ENCODE measurements at regions of chr12 and their contacts with region 1.

Region 1: DNA sequence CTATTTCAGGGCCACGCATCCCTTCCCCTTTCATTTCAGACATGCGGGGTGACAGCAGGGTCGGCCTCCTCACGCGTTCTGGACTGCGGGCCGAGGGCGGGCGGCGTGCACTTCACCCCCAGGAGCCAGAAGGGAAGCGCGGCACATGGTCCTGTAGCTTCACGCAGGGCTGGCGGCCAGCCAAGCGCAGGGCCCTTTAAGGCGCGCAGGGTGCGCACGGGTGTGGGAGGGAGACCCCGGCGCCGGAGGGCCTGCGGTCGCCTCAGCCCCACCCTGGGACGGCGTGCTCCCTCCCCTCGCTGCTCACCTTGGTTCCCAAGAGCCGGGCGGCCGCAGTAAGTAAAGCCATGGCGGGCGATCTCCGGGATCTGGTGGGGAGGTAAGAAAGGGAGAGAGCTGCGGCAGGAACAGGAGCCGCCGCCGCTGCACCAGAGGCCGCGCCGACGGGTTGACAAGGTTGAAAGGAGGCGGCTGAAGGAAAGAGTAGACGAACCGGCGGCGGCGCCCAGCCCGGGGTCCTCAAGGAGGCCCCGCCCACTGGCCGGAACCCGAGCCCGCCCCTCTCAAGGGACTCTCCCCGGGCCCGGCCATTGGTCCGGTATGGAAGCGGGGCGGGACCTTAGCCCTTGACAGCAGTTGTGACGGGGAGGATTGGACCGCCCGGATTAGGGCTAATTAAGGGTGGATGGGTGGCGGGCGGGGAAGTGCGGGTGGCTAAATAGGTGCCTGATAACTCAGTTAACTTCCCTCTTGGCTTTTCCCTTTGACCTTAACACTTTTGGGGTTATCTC is at the start of gene CS:
- DNase-seq: peak; percentile 97
- ATAC-seq: peak; percentile 96
- H3K4me3 Mint-ChIP-seq: peak within 1 kb of the TSS; percentile 96
- H3K27ac Mint-ChIP-seq: peak within 1 kb of the TSS; percentile 97
- H3K4me1 Mint-ChIP-seq: peaks cover 59% of the 10 kb centered on the region
- H3K27me3 Mint-ChIP-seq: no peaks in the 10 kb centered on the region
- CTCF ChIP-seq: no peak
- total RNA-seq, gene CS: 229 and 233 TPM in 2 replicates

Region 2: GRCh38 chr12:55973598-55974307 is 326.3 kb before region 1 on chr12 and contains the start of gene RAB5B:
- CTCF ChIA-PET with region 1: no interaction called
- POLR2A ChIA-PET with region 1: no interaction called
- intact Hi-C with region 1: loop called (anchors 1 kb)
- DNase-seq: peak; percentile 83
- ATAC-seq: peak; percentile 87
- H3K4me3 Mint-ChIP-seq: no peak within 1 kb of the TSS
- H3K27ac Mint-ChIP-seq: no peak within 1 kb of the TSS
- H3K4me1 Mint-ChIP-seq: peaks cover 27% of the 10 kb centered on the region
- H3K27me3 Mint-ChIP-seq: no peaks in the 10 kb centered on the region
- CTCF ChIP-seq: no peak
- total RNA-seq, gene RAB5B: 82.1 and 83.8 TPM in 2 replicates

Region 3: GRCh38 chr12:56258057-56258819 is 41.8 kb before region 1 on chr12 and contains the start of gene ANKRD52:
- CTCF ChIA-PET with region 1: interaction called, 3 read pairs
- POLR2A ChIA-PET with region 1: no interaction called
- intact Hi-C with region 1: loop called (anchors 1 kb)
- DNase-seq: peak; percentile 89
- ATAC-seq: peak; percentile 94
- H3K4me3 Mint-ChIP-seq: peak within 1 kb of the TSS; percentile 91
- H3K27ac Mint-ChIP-seq: peak within 1 kb of the TSS; percentile 77
- H3K4me1 Mint-ChIP-seq: peaks cover 21% of the 10 kb centered on the region
- H3K27me3 Mint-ChIP-seq: no peaks in the 10 kb centered on the region
- CTCF ChIP-seq: peak; percentile 28
- total RNA-seq, gene ANKRD52: 44.1 and 44.8 TPM in 2 replicates

Region 4: DNA sequence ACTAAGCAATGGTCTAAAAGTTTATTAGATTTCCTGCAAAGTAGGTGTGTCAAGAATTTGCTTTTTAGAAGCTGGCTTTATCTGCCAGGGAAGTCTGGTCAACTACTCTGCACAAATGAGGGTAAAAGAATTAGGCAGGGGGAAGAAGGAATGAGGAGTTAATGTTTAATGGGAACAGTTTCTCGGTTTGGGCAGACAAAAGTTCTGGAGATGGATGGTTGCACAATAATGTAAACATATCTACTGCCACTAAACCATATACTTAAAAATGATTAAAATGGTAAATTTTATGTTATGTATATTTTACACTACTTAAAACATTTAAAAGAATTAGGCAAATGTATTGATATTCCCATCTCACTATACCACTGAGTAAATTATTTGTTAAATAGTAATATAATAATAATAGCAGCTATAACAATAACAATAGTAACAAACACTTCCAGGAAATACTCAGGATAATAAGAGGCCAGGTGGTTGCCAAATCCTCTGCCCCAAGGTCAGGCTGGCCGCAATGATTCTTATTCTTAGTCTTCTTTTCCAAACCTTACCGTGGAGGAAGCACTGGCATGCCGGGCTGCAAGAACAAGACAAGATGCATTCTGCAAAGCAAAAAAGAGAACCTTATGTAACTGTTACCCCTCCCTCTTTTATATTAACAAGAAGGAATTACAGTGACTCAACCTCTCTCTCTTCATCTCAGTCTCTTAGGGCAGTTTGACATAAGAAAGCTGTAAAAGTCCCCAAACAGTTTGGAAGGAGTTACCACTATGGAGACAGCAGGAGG is 13.8 kb before region 1 on chr12:
- CTCF ChIA-PET with region 1: no interaction called
- POLR2A ChIA-PET with region 1: interaction called, 4 read pairs
- intact Hi-C with region 1: loop called (anchors 2 kb)
- DNase-seq: no peak
- ATAC-seq: no peak
- H3K4me3 Mint-ChIP-seq: no peak overlapping the region
- H3K27ac Mint-ChIP-seq: no peak overlapping the region
- H3K4me1 Mint-ChIP-seq: peaks cover 8% of the 10 kb centered on the region
- H3K27me3 Mint-ChIP-seq: no peaks in the 10 kb centered on the region
- CTCF ChIP-seq: no peak

Region 5: DNA sequence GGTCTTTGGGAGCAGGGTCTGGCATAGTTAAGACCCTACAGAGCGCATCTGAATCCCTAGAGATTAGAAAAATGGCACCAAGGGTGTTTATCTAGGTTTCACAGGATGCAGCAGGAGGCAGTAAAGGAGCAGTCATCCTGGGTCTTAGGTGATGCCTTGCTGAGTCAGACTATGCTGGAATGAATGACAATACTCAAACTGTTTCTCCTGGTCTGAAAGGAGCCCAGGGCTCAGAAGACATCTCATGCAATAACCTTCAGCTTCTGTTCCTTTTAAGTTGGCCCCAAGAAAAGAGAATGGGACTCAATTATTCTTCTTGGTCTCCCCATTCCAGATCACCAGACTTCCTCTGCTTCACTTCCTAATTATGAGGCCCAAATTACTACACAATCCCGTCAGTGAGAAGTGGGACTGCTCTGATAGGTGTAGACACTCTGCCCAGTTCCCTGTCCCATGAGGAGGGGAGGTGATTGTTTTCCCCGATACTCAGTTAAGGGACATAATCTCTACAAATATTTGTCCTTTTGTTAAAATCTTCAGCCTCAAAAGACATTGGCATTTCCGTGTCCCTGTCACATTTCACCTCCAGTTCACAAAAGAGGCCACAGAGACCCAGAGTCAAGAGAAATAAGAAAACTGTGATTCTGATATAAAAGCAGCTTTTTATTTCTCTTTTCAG is 77.4 kb after region 1 on chr12:
- CTCF ChIA-PET with region 1: no interaction called
- POLR2A ChIA-PET with region 1: no interaction called
- intact Hi-C with region 1: loop called (anchors 1 kb)
- DNase-seq: no peak
- ATAC-seq: no peak
- H3K4me3 Mint-ChIP-seq: no peak overlapping the region
- H3K27ac Mint-ChIP-seq: peak overlapping the region; percentile 94
- H3K4me1 Mint-ChIP-seq: peaks cover 53% of the 10 kb centered on the region
- H3K27me3 Mint-ChIP-seq: no peaks in the 10 kb centered on the region
- CTCF ChIP-seq: no peak

Region 6: DNA sequence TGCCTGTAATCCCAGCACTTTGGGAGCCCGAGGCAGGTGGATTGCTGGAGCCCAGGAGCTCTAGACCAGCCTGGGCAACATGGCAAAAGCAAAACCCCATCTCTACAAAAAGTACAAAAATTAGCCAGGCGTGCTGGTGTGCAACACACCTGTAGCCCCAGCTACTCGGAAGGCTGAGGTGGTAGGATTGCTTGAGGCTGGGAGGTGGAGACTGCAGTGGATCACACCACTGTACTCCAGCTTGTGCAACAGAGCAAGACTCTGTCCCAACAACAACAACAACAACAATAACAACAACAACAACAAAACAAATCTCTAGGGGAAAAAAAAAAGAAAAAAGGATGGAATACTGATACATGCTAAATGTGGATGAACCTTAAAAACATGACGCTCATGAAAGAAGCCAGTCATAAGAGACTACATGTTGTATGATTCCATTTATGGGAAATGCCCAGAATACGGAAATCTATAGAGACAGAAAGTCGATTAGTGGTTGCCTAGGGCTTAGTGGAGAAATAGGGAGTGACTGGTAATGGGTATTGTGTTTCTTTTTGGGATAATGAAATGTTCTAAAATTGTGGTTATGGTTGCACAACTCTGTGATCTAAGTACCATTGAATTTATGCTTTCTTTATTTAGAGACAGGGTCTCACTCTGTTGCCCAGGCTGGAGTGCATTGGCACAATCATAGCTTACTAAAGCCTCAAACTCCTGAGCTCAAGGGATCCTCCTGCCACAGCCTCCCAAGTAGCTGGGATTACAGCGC is 229.4 kb after region 1 on chr12:
- CTCF ChIA-PET with region 1: no interaction called
- POLR2A ChIA-PET with region 1: no interaction called
- intact Hi-C with region 1: no loop called
- DNase-seq: no peak
- ATAC-seq: no peak
- H3K4me3 Mint-ChIP-seq: no peak overlapping the region
- H3K27ac Mint-ChIP-seq: no peak overlapping the region
- H3K4me1 Mint-ChIP-seq: no peaks in the 10 kb centered on the region
- H3K27me3 Mint-ChIP-seq: no peaks in the 10 kb centered on the region
- CTCF ChIP-seq: no peak